Aorta (tissue), 5 donors: ENCODE measurements at regions of chr5 and their contacts with region 1.

Region 1: GRCh38 chr5:172006321-172007174 is at the start of gene FBXW11:
- DNase-seq: peak; percentile 98 to 99
- ATAC-seq: peak; percentile 97
- H3K4me3 ChIP-seq: peak within 1 kb of the TSS; percentile 79 to 92
- H3K27ac ChIP-seq: peak within 1 kb of the TSS; percentile 92 to 96
- H3K4me1 ChIP-seq: no peaks in the 10 kb centered on the region
- H3K27me3 ChIP-seq: no peaks in the 10 kb centered on the region
- total RNA-seq, gene FBXW11: 63.1 to 64.0 TPM

Region 2: GRCh38 chr5:171970826-171971225 is 35.7 kb before region 1 on chr5:
- intact Hi-C with region 1: loop called in 1 of 2 experiments (anchors 5 kb)
- DNase-seq: no peak
- ATAC-seq: no peak
- H3K4me3 ChIP-seq: no peak overlapping the region
- H3K27ac ChIP-seq: no peak overlapping the region
- H3K4me1 ChIP-seq: peaks cover 0 to 4% of the 10 kb centered on the region in 2 donors
- H3K27me3 ChIP-seq: no peaks in the 10 kb centered on the region

Region 3: GRCh38 chr5:172283020-172283861 is 276.7 kb after region 1 on chr5 and contains the start of gene UBTD2:
- intact Hi-C with region 1: loop called in 1 of 2 experiments (anchors 10 kb)
- DNase-seq: peak; percentile 92 to 94
- ATAC-seq: peak; percentile 89
- H3K4me3 ChIP-seq: peak within 1 kb of the TSS; percentile 91 to 93
- H3K27ac ChIP-seq: peak within 1 kb of the TSS; percentile 72 to 93
- H3K4me1 ChIP-seq: no peaks in the 10 kb centered on the region
- H3K27me3 ChIP-seq: no peaks in the 10 kb centered on the region
- total RNA-seq, gene UBTD2: 17.0 to 21.1 TPM